Activated T-helper 1 cell treated with anti-CD3 and anti-CD28 coated beads, Interleukin-12 subunit alpha, Interleukin-12 subunit beta, Interleukin-2, Interleukin-4 antibody, amounts not matched to agents 30 ng/mL and 10 ng/mL and 1 ng/mL, durations not matched to agents 14 hours and 24 hours and 36 hours (primary cell): ENCODE measurements at regions of chr15 and their contacts with region 1.

Region 1: DNA sequence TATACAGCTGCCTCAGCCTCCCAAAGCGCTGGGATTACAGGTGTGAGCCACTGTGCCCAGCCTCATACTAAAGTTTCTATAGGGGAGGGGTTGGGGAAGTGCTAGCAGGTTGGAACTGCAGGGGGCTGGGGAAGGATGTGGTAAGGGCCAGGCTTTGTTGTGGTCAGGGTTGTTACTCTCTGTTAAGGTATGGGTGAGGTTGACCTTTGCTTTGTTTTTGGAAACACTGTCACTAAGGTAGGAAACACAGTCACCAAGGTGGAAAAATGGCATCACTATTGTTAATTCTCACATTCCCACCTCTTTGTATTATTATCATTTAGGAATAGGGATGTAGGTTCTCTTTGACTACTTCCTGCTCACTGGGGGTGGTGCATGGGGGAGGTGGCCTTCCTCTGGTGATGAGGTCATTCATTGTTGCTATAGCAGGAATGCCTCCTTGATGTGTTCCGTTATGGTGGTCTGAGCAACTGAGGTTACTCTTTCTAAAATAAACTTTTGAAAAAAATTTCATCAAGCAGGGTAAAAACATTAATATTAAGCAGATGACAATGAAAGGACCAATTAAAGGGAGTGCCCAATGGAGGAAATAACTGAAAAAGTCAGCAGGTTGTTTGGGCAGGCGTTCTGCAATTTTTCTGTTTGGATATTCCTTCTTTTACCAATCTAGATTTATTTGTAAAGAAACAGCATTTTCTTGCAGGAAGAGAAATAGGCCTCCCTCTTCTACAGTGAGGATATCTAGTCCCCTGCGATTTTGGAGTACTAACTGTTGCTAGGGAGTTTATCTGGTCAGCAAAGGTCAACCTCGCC is 150.5 kb downstream of the WDR76 start:
- DNase-seq: peak; percentile 55
- H3K4me3 Mint-ChIP-seq: no peak overlapping the region
- H3K27ac Mint-ChIP-seq: peak overlapping the region; percentile 70
- H3K4me1 Mint-ChIP-seq: peaks cover 41% of the 10 kb centered on the region
- H3K27me3 Mint-ChIP-seq: peaks cover 12% of the 10 kb centered on the region

Region 2: DNA sequence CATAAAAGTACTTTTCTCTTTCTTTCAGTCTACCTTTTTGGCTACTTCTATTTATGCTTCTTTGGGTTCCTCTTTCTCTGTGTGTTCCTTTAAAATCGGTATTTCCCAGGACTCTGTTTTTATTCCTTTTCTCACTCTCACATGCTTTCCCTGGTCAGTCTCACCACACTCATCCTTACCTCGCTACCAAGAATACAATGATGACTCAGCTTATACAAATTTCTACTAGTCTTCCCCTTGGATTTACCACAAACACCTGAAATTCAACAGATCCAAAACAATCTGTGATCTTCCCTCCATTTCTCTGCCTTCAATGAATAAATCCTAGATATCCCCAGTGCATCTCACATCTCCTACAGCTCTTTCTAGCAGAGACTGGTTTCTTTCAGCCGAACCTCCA is 553.5 kb before region 1 on chr15:
- intact Hi-C with region 1: no loop called
- DNase-seq: no peak
- H3K4me3 Mint-ChIP-seq: no peak overlapping the region
- H3K27ac Mint-ChIP-seq: no peak overlapping the region
- H3K4me1 Mint-ChIP-seq: peaks cover 10% of the 10 kb centered on the region
- H3K27me3 Mint-ChIP-seq: no peaks in the 10 kb centered on the region

Region 3: DNA sequence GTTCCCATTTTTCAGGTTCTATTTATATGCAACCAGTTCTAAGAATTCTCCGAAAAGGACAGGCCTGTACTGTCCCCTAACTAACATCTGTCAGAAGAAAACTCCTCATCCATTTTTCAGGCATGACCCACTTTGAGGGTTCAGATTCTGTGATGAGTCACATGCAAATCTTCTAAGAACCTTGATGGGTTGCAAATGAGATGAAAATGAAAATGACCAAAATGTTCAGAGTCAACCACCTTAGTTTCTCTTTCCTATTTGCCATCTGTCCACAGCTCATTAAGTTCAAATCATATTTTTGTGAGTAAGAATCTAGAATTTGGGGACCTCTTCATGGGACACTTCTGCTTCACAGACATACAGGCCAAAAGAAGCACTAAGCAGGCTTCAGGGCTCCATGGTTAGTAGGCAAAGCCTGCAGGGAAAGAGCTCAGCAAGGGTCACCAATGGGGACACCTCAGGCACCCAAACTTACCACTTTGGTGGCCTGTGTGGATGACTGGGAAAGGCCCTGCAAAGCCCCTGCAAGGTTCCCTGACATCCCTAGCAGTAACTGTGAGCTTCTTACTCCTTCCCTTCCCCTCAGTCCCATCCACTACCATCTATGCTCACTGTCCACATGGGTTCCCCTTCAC is 28.5 kb before region 1 on chr15:
- intact Hi-C with region 1: loop called (anchors 1 kb)
- DNase-seq: no peak
- H3K4me3 Mint-ChIP-seq: no peak overlapping the region
- H3K27ac Mint-ChIP-seq: peak overlapping the region; percentile 75
- H3K4me1 Mint-ChIP-seq: peaks cover 38% of the 10 kb centered on the region
- H3K27me3 Mint-ChIP-seq: peaks cover 5% of the 10 kb centered on the region

Region 4: DNA sequence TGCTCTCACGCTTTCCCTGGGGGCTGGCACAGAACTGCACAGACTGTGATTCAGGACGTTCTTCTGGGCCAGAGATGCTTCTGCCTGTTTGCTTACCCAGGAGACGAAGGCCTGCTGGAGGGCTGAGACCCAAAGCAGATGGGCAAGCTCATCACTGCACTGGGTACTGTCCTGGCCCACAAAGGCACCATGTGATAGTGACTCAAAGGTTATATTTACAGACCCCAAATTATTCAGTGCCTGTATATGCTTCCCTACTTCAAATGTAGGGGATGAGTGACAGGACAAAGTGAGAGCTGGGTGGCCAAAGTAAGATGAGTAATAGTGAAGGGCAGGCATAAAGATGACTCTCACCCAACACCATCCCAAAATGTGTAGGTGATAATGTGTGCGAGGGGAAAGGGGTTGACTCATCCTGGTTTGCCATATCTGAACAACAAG is 23.1 kb before region 1 on chr15:
- intact Hi-C with region 1: loop called (anchors 1 kb)
- DNase-seq: no peak
- H3K4me3 Mint-ChIP-seq: no peak overlapping the region
- H3K27ac Mint-ChIP-seq: peak overlapping the region; percentile 82
- H3K4me1 Mint-ChIP-seq: peaks cover 28% of the 10 kb centered on the region
- H3K27me3 Mint-ChIP-seq: peaks cover 5% of the 10 kb centered on the region

Region 5: GRCh38 chr15:44286814-44287452 is 309.7 kb after region 1 on chr15:
- intact Hi-C with region 1: loop called (anchors 10 kb)
- DNase-seq: no peak
- H3K4me3 Mint-ChIP-seq: peak overlapping the region; percentile 92
- H3K27ac Mint-ChIP-seq: peak overlapping the region; percentile 100
- H3K4me1 Mint-ChIP-seq: peaks cover 44% of the 10 kb centered on the region
- H3K27me3 Mint-ChIP-seq: peaks cover 9% of the 10 kb centered on the region